Cardiac septum (tissue), 1 donor: ENCODE measurements at regions of chrX and their contacts with region 1.

Region 1: DNA sequence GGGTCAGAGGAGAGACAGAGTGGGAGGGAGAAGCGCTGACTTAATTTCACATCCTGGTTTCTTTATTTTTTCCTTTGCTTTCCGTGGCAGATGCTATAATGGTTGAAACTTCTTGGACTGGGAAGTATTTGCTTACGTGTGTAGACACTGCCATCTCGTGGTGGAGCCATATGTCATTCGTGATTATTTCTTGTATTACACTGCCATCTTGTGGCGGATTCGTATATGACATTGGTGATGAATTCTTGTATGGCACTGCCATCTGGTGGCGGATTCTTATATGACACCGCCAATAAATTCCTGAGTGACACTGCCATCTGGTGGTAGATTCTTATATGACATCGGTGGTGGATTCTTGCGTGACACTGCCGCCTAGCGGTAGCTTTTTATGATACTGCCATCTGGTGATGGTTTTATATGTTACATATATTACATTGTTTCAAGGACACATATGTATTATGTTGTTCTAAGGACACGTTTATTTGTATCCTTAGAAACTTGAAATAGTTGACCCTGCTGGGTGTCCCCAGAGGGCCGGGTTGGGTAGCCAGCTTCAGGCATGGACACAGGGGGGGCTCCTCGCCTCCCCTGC is 37.3 kb upstream of the CLCN4 start:
- DNase-seq: peak; percentile 81

Region 2: DNA sequence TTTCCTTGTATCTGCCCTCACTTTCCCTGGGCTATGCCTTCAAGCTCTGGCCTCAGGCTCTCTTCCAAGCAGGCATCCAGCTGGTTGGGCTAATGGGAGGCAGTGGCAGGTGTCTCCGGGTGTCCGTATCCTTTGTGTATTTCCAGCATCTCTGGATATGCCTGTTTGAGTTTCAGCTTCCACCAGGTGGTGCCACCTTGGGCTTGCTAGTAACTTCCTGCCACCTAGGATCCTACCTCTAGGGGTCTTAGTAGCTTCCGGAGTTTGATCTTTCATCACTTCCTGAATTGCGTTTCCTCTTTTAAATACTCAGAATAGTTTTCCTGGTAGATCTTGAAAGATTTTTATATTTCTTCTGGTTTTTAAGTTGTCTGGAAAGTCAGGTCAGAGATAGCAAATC is 1364.4 kb before region 1 on chrX:
- intact Hi-C with region 1: loop called (anchors 10 kb)
- DNase-seq: no peak

Region 3: GRCh38 chrX:9885150-9885549 is 234.3 kb before region 1 on chrX:
- intact Hi-C with region 1: loop called (anchors 5 kb)
- DNase-seq: peak; percentile 83

Region 4: GRCh38 chrX:9995855-9996339 is 123.6 kb before region 1 on chrX:
- intact Hi-C with region 1: loop called (anchors 1 kb)
- DNase-seq: peak; percentile 91

Region 5: GRCh38 chrX:10014462-10015356 is 104.8 kb before region 1 on chrX:
- intact Hi-C with region 1: loop called (anchors 5 kb)
- DNase-seq: peak; percentile 94

Region 6: DNA sequence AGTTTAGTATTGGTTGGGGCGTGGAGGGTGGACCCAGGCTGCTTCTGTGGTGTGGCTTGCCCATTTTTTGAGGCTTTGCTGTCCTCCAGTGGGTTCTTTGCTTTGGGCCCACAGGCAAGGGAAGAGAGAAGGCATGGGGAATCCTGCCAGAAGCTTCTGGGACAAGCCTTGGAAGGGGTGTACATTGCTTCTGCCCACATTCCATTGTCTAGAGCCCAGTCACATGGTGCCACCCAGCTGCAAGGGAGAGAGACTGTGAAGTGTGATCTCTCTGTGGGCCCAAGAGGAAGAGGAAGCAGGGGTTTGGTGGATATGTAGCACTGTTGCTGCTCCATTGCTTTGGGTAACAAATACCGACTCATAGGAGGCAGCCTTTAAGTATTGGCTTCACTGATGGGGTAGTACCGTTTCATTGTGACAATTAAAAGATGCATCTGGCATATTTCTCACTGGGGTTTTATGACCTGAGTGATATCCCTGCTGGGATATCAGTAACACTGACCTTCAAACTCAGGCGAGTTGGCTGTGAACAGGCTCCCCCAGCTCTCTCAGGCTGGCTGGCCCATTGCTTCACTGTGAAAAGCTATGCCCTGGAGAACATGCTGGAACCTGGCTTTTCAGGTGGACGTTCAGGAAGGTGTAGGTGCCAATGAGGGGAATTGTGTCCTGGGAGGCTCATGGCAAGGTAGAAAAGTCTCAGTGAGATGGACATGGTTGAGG is 66.4 kb before region 1 on chrX:
- intact Hi-C with region 1: no loop called
- DNase-seq: no peak